CD8-positive, alpha-beta memory T cell (primary cell): ENCODE measurements at regions of chr1 and their contacts with region 1.

Region 1: GRCh38 chr1:179365320-179366092 is at the start of gene AXDND1:
- DNase-seq: peak; percentile 83 to 94 (median 89)
- H3K4me3 ChIP-seq: peak within 1 kb of the TSS; percentile 97
- H3K4me3 Mint-ChIP-seq: peak within 1 kb of the TSS; percentile 94 to 100 (median 96)
- H3K27ac ChIP-seq: peak within 1 kb of the TSS; percentile 100
- H3K27ac Mint-ChIP-seq: peak within 1 kb of the TSS; percentile 99 to 100 (median 100)
- H3K4me1 ChIP-seq: peaks cover 12% of the 10 kb centered on the region
- H3K4me1 Mint-ChIP-seq: peaks cover 10 to 15% (median 14%) of the 10 kb centered on the region in 3 donors
- H3K27me3 ChIP-seq: no peaks in the 10 kb centered on the region
- H3K27me3 Mint-ChIP-seq: no peaks in the 10 kb centered on the region
- total RNA-seq, gene AXDND1: 0.58 TPM in 1 of 2 experiments, not detected in the other

Region 2: GRCh38 chr1:178784131-178784536 is 581.4 kb before region 1 on chr1:
- CTCF ChIA-PET with region 1: no interaction called
- POLR2A ChIA-PET with region 1: no interaction called
- DNase-seq: no peak
- H3K4me3 ChIP-seq: no peak overlapping the region
- H3K4me3 Mint-ChIP-seq: no peak overlapping the region
- H3K27ac ChIP-seq: no peak overlapping the region
- H3K27ac Mint-ChIP-seq: no peak overlapping the region
- H3K4me1 ChIP-seq: no peaks in the 10 kb centered on the region
- H3K4me1 Mint-ChIP-seq: peaks cover 0 to 3% (median 0%) of the 10 kb centered on the region in 3 donors
- H3K27me3 ChIP-seq: no peaks in the 10 kb centered on the region
- H3K27me3 Mint-ChIP-seq: peaks cover 1 to 3% of the 10 kb centered on the region in 2 donors

Region 3: DNA sequence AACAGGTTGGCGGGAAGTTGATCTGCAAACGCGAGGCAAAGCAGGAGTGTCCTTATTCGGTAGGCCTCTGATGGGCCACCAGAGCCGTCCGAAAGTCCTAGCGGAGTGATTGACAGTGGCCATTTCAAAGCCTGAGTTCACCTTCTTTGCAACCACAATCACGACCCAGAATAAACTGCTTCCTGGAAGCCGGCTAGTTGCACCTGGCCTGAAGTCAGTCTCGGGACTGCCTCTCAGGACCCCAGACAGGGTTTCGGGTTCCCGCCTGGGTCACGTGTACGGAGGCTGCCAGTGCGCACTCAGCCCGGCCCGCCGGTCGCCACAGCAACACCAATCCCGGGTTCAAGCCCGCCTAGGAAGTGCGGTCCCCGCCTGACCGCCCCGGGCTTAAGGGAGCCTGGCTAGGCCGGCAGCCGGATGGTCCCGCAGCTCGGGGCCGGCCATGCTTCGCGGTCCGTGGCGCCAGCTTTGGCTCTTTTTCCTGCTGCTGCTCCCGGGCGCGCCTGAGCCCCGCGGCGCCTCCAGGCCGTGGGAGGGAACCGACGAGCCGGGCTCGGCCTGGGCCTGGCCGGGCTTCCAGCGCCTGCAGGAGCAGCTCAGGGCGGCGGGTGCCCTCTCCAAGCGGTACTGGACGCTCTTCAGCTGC is 283.7 kb before region 1 on chr1 and contains the start of gene TOR3A:
- CTCF ChIA-PET with region 1: interaction called, 54 read pairs
- POLR2A ChIA-PET with region 1: interaction called, 3 read pairs
- DNase-seq: peak; percentile 61 to 85 (median 77)
- H3K4me3 ChIP-seq: peak within 1 kb of the TSS; percentile 76
- H3K4me3 Mint-ChIP-seq: peak within 1 kb of the TSS; percentile 91 to 99 (median 96)
- H3K27ac ChIP-seq: peak within 1 kb of the TSS; percentile 82
- H3K27ac Mint-ChIP-seq: peak within 1 kb of the TSS; percentile 90 to 99 (median 97)
- H3K4me1 ChIP-seq: peaks cover 21% of the 10 kb centered on the region
- H3K4me1 Mint-ChIP-seq: peaks cover 23 to 45% (median 30%) of the 10 kb centered on the region in 3 donors
- H3K27me3 ChIP-seq: no peaks in the 10 kb centered on the region
- H3K27me3 Mint-ChIP-seq: no peaks in the 10 kb centered on the region
- total RNA-seq, gene TOR3A: 48.5 to 54.6 TPM

Region 4: GRCh38 chr1:179121159-179121938 is 244.2 kb before region 1 on chr1:
- CTCF ChIA-PET with region 1: interaction called, 32 read pairs
- POLR2A ChIA-PET with region 1: interaction called, 4 read pairs
- DNase-seq: peak in 3 of 5 donors; percentile 15 to 51 (median 33)
- H3K4me3 ChIP-seq: no peak overlapping the region
- H3K4me3 Mint-ChIP-seq: no peak overlapping the region
- H3K27ac ChIP-seq: no peak overlapping the region
- H3K27ac Mint-ChIP-seq: peak overlapping the region in 3 of 8 donors; percentile 9 to 47 (median 33)
- H3K4me1 ChIP-seq: no peaks in the 10 kb centered on the region
- H3K4me1 Mint-ChIP-seq: no peaks in the 10 kb centered on the region
- H3K27me3 ChIP-seq: no peaks in the 10 kb centered on the region
- H3K27me3 Mint-ChIP-seq: no peaks in the 10 kb centered on the region

Region 5: DNA sequence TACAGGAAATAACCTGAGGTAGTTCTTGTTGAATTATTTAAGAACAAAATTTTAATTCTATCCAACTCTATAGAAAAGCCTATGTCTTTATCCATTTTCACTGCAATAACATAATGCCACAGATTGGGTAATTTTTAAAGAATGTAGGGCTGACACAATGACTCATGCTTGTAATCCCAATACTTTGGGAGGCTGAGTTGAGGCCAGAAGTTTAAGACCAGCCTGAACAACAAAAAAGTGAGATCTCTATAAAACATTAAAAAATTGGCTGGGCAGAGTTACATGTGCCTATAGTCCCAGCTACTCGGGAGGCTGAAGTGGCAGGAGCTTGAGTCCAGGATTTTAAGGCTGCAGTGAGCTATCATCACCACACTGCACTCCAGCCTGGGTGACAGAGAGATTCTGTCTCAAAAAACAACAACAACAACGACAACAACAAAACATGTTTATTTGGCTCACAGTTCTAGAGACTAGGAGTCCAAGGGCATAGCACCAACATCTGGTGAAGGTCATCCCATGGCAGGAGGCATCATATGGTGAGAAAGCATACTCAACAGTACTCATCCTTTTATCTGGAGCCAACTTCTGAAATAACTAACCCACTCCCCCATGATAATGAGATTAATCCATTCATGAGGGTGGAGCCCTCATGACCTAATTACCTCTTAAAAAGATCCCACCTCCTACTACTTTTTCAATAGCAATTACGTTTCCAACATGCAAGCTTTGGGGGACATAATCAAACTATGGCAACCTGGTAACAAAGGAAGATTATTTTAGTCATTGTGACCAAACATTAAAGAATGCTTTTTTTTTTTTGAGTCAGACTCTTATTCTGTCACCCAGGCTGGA is 195.7 kb before region 1 on chr1:
- CTCF ChIA-PET with region 1: no interaction called
- POLR2A ChIA-PET with region 1: no interaction called
- DNase-seq: no peak
- H3K4me3 ChIP-seq: no peak overlapping the region
- H3K4me3 Mint-ChIP-seq: no peak overlapping the region
- H3K27ac ChIP-seq: no peak overlapping the region
- H3K27ac Mint-ChIP-seq: peak overlapping the region in 1 of 8 donors; percentile 39
- H3K4me1 ChIP-seq: no peaks in the 10 kb centered on the region
- H3K4me1 Mint-ChIP-seq: peaks cover 3 to 18% (median 13%) of the 10 kb centered on the region in 3 donors
- H3K27me3 ChIP-seq: no peaks in the 10 kb centered on the region
- H3K27me3 Mint-ChIP-seq: no peaks in the 10 kb centered on the region

Region 6: DNA sequence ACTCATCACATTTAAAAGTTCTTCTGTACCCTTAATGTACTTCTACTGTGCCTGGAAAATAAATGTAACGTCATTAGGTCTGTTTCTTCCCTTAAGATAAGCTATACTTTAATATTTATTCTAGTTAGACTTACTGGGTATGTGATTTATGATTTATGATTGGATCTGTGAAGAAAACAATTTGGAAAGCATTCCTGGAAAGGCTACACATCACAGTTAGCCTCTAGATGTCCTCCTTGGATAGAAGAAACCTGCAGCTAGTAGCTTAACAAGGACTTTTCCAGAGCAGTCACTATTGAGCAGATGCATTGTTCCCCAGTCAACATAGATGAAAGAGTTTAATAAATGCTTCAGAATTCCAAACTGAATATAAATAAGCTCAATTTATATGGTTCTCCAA is 113.8 kb before region 1 on chr1:
- CTCF ChIA-PET with region 1: interaction called, 12 read pairs
- POLR2A ChIA-PET with region 1: no interaction called
- DNase-seq: peak in 2 of 5 donors; percentile 4 to 14
- H3K4me3 ChIP-seq: no peak overlapping the region
- H3K4me3 Mint-ChIP-seq: no peak overlapping the region
- H3K27ac ChIP-seq: no peak overlapping the region
- H3K27ac Mint-ChIP-seq: no peak overlapping the region
- H3K4me1 ChIP-seq: no peaks in the 10 kb centered on the region
- H3K4me1 Mint-ChIP-seq: no peaks in the 10 kb centered on the region
- H3K27me3 ChIP-seq: no peaks in the 10 kb centered on the region
- H3K27me3 Mint-ChIP-seq: peaks cover 2 to 3% of the 10 kb centered on the region in 2 donors

Region 7: DNA sequence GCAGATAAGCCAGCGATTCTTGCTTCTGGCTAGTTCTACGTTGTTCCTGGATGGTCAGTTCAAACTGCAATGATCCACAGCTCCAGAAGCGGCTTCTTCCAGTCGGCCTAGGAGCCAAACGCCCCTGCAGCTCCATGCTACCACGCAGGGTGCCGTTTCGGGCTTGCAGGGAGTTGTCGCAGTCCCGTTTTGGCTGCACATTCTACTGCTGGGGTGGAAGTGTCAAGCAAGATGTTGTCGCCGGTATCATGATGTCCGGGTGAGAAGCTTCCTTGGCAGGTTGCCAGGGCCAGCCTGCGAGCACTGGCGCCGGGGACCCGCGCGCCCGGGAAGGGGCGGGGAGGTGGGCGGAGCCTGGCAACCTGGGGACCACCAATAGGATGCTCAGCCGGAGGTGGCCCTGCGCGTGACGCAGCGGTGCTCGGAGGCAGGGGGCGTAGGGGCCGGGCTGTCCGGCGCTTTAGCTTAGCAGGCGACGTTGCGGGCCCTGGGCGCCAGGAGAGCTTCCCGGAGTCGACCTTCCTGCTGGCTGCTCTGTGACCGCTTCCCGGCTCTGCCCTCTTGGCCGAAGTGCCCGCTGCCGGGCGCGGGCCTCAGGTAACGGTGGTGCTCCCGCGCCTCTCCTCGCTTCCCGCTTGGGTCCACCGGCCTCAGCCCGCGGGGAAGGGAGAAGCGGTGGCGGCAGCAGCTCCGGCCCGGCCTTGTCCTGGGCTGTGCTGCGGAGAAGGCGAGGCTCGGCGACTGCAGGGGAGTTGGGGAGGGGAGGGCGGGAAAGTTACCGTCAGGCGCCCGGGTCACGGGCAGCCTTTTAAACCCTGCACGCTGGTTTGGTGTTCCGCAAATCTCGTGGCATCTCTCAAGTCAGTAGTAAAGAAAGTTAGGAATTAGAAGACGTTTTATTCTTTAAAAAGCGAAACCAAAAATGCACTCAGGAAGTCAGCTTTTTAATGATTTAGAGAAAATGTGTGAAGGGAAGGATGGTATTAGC is 71.9 kb before region 1 on chr1 and contains the start of gene SOAT1:
- CTCF ChIA-PET with region 1: interaction called, 8 read pairs
- POLR2A ChIA-PET with region 1: interaction called, 15 read pairs
- DNase-seq: peak; percentile 91 to 95 (median 93)
- H3K4me3 ChIP-seq: peak within 1 kb of the TSS; percentile 41
- H3K4me3 Mint-ChIP-seq: peak within 1 kb of the TSS; percentile 88 to 94 (median 90)
- H3K27ac ChIP-seq: peak within 1 kb of the TSS; percentile 91
- H3K27ac Mint-ChIP-seq: peak within 1 kb of the TSS; percentile 87 to 99 (median 94)
- H3K4me1 ChIP-seq: peaks cover 33% of the 10 kb centered on the region
- H3K4me1 Mint-ChIP-seq: peaks cover 36 to 50% (median 45%) of the 10 kb centered on the region in 3 donors
- H3K27me3 ChIP-seq: no peaks in the 10 kb centered on the region
- H3K27me3 Mint-ChIP-seq: no peaks in the 10 kb centered on the region
- total RNA-seq, gene SOAT1: 66.0 TPM

Region 8: DNA sequence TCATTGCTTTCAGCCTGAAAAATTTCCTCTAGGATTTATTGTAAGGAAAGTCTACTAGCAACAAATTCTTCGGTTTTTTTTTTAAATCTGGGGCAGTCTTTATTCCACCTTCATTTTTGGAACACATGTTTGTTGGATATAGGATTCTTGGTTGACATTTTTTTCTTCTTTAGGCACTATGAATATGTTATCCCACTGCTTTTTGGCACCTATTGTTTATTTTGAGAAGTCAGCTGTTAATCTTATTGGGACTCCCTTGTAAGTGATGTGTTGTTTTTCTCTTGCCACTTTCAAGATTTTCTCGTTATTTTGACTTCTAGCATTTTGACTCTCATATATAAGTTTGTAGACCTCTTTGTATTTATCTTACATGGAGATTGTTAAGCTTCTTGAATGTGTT is 111.0 kb after region 1 on chr1:
- CTCF ChIA-PET with region 1: no interaction called
- POLR2A ChIA-PET with region 1: no interaction called
- DNase-seq: no peak
- H3K4me3 ChIP-seq: no peak overlapping the region
- H3K4me3 Mint-ChIP-seq: no peak overlapping the region
- H3K27ac ChIP-seq: no peak overlapping the region
- H3K27ac Mint-ChIP-seq: no peak overlapping the region
- H3K4me1 ChIP-seq: no peaks in the 10 kb centered on the region
- H3K4me1 Mint-ChIP-seq: no peaks in the 10 kb centered on the region
- H3K27me3 ChIP-seq: no peaks in the 10 kb centered on the region
- H3K27me3 Mint-ChIP-seq: peaks cover 3 to 5% of the 10 kb centered on the region in 2 donors